ENCODE measurements at regions of chr11 and their contacts with region 1.

Region 1: DNA sequence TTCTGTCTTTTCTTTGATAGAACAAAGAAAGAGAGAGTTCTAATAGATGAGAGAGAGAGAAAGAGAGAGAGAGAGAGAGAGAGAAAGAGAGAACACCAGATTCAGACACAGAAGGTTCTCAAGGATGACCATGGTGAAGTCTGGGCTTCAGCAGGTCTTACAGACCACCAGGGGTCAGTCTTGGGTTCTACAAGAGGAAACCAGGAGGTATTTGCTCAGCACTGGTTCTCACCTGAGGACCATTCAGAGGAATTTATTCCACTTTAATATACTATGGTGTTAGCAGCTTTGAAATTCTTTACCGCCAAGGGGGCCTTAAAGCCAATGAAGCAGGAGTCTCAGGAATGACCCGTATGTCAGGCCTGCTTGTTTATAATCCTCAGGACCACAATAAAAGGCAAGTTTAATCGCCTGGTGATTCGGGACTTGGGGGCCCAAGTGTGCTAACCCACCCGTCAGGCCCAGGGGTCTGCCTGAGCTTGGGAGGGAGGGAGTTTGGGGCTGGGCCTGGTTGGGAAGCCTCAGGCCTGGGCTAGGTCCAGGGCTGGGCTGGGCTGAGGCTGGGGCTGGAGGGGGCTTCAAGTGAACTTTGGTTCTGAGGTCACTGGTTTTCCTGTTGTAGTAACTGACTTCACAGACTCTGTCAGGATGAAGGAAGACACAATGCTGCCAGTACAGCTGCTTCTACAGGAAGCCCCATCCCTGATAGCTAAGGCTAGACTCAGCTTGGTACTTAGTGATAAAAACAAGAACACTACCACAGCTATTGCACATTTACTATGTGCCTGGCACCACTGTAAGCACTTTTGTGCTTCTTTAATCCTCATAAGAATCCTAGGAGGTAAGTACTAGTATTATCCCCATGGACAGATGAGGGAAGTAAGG is 179.2 kb upstream of the ZBED5 start:
- DNase-seq: peak; percentile 64
- ATAC-seq: peak; percentile 89
- H3K4me3 ChIP-seq: no peak overlapping the region
- H3K27ac ChIP-seq: no peak overlapping the region
- H3K4me1 ChIP-seq: no peaks in the 10 kb centered on the region
- H3K27me3 ChIP-seq: peaks cover 2 to 3% of the 10 kb centered on the region in 2 experiments; a peak in 4 of 5 replicates
- CTCF ChIP-seq: peak; percentile 68
- EP300 ChIP-seq: no peak
- POLR2A ChIP-seq: no peak
- RAD21 ChIP-seq: 0 out of 2 replicates have a peak, but pooled peaks have one; percentile 29

Region 2: DNA sequence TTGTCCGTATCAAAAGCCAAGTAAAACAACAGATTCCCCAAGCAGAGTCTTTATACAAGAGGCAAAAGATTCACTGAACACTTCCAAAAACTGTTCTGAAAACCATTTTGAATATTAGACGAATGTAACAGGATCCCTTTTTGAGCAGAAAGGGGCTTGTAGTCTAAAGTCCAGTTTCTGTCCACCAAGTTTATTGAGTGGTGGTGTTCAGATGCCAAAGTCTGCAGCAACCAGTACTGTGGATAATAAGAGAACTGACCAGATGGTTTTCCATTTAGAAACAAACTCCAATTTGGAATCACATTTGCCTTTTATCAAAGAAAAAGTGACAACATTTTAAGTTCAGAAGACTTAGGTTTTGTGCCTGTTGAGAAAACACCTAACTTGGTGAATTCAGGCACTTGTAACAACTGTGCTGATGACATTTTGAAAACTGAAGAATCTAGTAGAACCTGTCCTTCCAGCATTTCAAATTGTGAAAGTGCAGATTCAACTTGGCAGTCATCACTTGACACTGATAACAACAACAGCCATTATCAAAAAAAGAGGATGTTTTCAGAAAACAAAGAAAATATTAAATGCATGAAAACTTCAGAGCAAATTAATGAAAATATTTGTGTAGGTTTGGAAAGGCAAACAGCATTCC is 98.9 kb after region 1 on chr11:
- CTCF ChIA-PET with region 1: no interaction called
- POLR2A ChIA-PET with region 1: no interaction called
- in situ Hi-C with region 1: no loop called
- intact Hi-C with region 1: no loop called
- DNase-seq: no peak
- ATAC-seq: peak; percentile 41; the same call in 1 of the 3 replicates
- H3K4me3 ChIP-seq: no peak overlapping the region
- H3K27ac ChIP-seq: no peak overlapping the region
- H3K4me1 ChIP-seq: peaks cover 11% of the 10 kb centered on the region
- H3K27me3 ChIP-seq: no peaks in the 10 kb centered on the region; a peak in 1 of 5 replicates
- CTCF ChIP-seq: no peak
- EP300 ChIP-seq: no peak
- POLR2A ChIP-seq: no peak
- RAD21 ChIP-seq: no peak

Region 3: GRCh38 chr11:11265994-11266606 is 229.0 kb after region 1 on chr11:
- CTCF ChIA-PET with region 1: interaction called, 3 read pairs
- POLR2A ChIA-PET with region 1: no interaction called
- in situ Hi-C with region 1: no loop called
- intact Hi-C with region 1: loop called (anchors 2 kb)
- DNase-seq: no peak
- ATAC-seq: peak; percentile 88
- H3K4me3 ChIP-seq: no peak overlapping the region
- H3K27ac ChIP-seq: no peak overlapping the region
- H3K4me1 ChIP-seq: no peaks in the 10 kb centered on the region
- H3K27me3 ChIP-seq: no peaks in the 10 kb centered on the region; a peak in 1 of 5 replicates
- CTCF ChIP-seq: peak; percentile 82
- EP300 ChIP-seq: no peak
- POLR2A ChIP-seq: no peak
- RAD21 ChIP-seq: peak; percentile 21; the same call in 1 of the 2 replicates

Measured in HepG2 (cell line).